Activated CD8-positive, alpha-beta T cell treated with anti-CD3 and anti-CD28 coated beads for 36 hours (primary cell): ENCODE measurements at regions of chr10 and their contacts with region 1.

Region 1: DNA sequence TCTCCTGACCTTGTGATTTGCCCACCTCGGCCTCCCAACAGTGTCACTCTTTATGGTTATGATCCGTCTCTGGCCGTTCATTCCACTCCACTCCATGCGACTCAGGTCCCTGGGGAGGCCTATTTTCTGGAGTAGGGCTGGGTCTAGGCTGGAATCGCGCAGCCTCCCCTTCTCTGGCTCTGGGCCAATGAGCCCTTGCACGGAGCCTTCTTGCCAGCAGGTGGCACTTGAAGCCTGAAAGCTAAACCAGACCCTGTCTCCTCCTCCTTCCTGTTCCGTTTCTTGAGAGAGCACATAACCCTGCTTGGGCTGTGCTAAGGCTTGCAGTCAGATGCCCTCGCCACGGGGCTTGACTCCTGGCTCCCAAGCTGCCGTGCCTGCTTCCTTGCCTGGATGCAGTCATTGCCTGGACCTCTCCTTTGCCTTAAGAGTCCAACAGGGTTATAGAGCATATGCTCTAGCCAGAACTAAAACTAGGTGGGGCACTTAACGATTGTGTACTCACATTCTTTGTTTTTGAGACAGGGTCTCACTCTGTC is 9.6 kb upstream of the DNAJB12 start:
- DNase-seq: peak; percentile 92
- ATAC-seq: peak; percentile 99
- H3K4me3 Mint-ChIP-seq: no peak overlapping the region
- H3K27ac Mint-ChIP-seq: peak overlapping the region; percentile 57
- H3K4me1 Mint-ChIP-seq: peaks cover 9% of the 10 kb centered on the region
- H3K27me3 Mint-ChIP-seq: no peaks in the 10 kb centered on the region
- CTCF ChIP-seq: peak; percentile 75

Region 2: GRCh38 chr10:72229261-72230251 is 134.8 kb before region 1 on chr10:
- CTCF ChIA-PET with region 1: no interaction called
- POLR2A ChIA-PET with region 1: no interaction called
- intact Hi-C with region 1: no loop called
- DNase-seq: no peak
- ATAC-seq: no peak
- H3K4me3 Mint-ChIP-seq: no peak overlapping the region
- H3K27ac Mint-ChIP-seq: peak overlapping the region; percentile 70
- H3K4me1 Mint-ChIP-seq: peaks cover 36% of the 10 kb centered on the region
- H3K27me3 Mint-ChIP-seq: no peaks in the 10 kb centered on the region
- CTCF ChIP-seq: no peak

Region 3: GRCh38 chr10:72375585-72375984 is 11.3 kb after region 1 on chr10:
- CTCF ChIA-PET with region 1: interaction called, 20 read pairs
- POLR2A ChIA-PET with region 1: no interaction called
- intact Hi-C with region 1: no loop called
- DNase-seq: no peak
- ATAC-seq: no peak
- H3K4me3 Mint-ChIP-seq: no peak overlapping the region
- H3K27ac Mint-ChIP-seq: no peak overlapping the region
- H3K4me1 Mint-ChIP-seq: peaks cover 2% of the 10 kb centered on the region
- H3K27me3 Mint-ChIP-seq: no peaks in the 10 kb centered on the region
- CTCF ChIP-seq: no peak

Region 4: DNA sequence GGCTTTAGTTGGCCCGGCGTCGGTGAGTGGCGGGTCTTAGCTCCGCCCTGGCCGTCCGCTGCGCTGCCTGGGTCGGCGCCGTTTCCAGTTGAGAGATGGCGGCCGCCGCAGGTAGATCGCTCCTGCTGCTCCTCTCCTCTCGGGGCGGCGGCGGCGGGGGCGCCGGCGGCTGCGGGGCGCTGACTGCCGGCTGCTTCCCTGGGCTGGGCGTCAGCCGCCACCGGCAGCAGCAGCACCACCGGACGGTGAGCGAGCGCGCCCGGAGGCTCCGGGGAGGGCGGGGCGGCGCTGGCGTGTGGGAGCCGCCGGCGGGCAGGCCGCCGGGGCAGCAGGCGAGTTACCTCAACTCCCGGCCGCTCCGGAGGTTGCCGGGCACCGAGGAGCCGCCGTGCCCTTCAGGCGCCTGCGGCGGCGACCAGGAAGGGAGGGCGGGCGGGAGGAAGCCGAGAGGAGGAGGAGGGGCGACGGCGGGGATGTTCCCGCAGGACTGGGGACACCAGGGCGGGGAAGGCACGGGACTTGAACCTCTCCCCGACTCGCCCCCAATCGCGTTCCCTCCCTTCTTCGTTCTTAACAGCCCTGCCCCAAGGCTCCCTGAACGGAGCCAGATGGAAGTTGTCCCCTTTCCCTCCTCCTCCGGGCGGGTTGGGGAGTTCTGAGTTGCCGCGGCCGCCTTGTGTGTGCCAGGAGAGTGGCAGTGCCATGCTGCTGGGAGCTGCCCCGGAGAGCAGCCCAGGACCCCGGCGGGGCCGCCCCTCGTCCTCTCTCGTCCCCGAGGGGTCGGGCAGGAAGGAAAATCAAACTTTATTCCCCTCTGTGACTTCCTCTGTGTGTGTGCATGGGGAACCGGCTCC is 328.0 kb after region 1 on chr10 and contains the start of gene MCU:
- CTCF ChIA-PET with region 1: interaction called, 13 read pairs
- POLR2A ChIA-PET with region 1: no interaction called
- intact Hi-C with region 1: no loop called
- DNase-seq: peak; percentile 95
- ATAC-seq: peak; percentile 99
- H3K4me3 Mint-ChIP-seq: peak within 1 kb of the TSS; percentile 81
- H3K27ac Mint-ChIP-seq: peak within 1 kb of the TSS; percentile 60
- H3K4me1 Mint-ChIP-seq: peaks cover 34% of the 10 kb centered on the region
- H3K27me3 Mint-ChIP-seq: no peaks in the 10 kb centered on the region
- CTCF ChIP-seq: no peak
- total RNA-seq, gene MCU: 17.1 to 18.3 TPM

Region 5: DNA sequence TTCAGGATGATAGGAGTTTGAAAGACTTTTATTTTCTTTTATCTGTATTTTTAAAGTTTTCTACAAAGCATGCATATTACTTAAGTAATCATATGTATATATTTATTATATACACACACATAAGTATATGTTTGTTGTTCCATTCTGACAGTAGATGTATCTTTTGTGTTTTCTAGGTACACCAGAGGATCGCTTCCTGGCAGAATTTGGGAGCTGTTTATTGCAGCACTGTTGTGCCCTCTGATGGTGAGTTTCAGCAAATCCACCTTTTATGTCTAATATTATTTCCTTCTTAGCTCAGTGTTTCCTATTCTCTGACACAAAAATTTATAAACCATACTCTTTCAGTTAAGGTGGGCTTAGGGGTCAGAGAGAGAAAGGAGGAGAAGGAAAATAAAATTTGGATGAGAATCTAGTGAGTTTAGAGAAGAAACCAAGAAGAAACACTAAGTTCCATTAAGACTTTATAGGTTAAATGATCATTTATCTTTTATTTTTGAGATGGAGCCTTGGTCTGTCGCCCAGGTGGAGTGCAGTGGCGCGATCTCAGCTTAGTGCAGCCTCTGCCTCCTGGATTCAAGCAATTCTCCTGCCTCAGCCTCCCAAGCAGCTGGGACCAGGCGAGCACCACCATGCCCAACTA is 470.0 kb after region 1 on chr10:
- CTCF ChIA-PET with region 1: interaction called, 30 read pairs
- POLR2A ChIA-PET with region 1: no interaction called
- intact Hi-C with region 1: loop called (anchors 5 kb)
- DNase-seq: peak; percentile 50
- ATAC-seq: peak; percentile 60
- H3K4me3 Mint-ChIP-seq: no peak overlapping the region
- H3K27ac Mint-ChIP-seq: no peak overlapping the region
- H3K4me1 Mint-ChIP-seq: peaks cover 2% of the 10 kb centered on the region
- H3K27me3 Mint-ChIP-seq: no peaks in the 10 kb centered on the region
- CTCF ChIP-seq: peak; percentile 60

Region 6: GRCh38 chr10:72875250-72876055 is 511.1 kb after region 1 on chr10:
- CTCF ChIA-PET with region 1: interaction called, 11 read pairs
- POLR2A ChIA-PET with region 1: no interaction called
- intact Hi-C with region 1: loop called (anchors 10 kb)
- DNase-seq: no peak
- ATAC-seq: no peak
- H3K4me3 Mint-ChIP-seq: no peak overlapping the region
- H3K27ac Mint-ChIP-seq: no peak overlapping the region
- H3K4me1 Mint-ChIP-seq: no peaks in the 10 kb centered on the region
- H3K27me3 Mint-ChIP-seq: no peaks in the 10 kb centered on the region
- CTCF ChIP-seq: peak; percentile 70